Activated T-helper 1 cell treated with anti-CD3 and anti-CD28 coated beads, Interleukin-12 subunit alpha, Interleukin-12 subunit beta, Interleukin-2, Interleukin-4 antibody, amounts not matched to agents 30 ng/mL and 10 ng/mL and 1 ng/mL, durations not matched to agents 14 hours and 24 hours and 36 hours (primary cell): ENCODE measurements at regions of chr20 and their contacts with region 1.

Region 1: GRCh38 chr20:44187051-44187762 is at the start of gene JPH2:
- DNase-seq: no peak
- H3K4me3 Mint-ChIP-seq: peak within 1 kb of the TSS; percentile 45
- H3K27ac Mint-ChIP-seq: no peak within 1 kb of the TSS
- H3K4me1 Mint-ChIP-seq: no peaks in the 10 kb centered on the region
- H3K27me3 Mint-ChIP-seq: peaks cover 41% of the 10 kb centered on the region
- total RNA-seq, gene JPH2: not detected in 2 replicates

Region 2: GRCh38 chr20:44115762-44116644 is 71.2 kb before region 1 on chr20:
- intact Hi-C with region 1: loop called (anchors 1 kb)
- DNase-seq: no peak
- H3K4me3 Mint-ChIP-seq: no peak overlapping the region
- H3K27ac Mint-ChIP-seq: no peak overlapping the region
- H3K4me1 Mint-ChIP-seq: peaks cover 6% of the 10 kb centered on the region
- H3K27me3 Mint-ChIP-seq: peaks cover 24% of the 10 kb centered on the region